A673 (cell line): ENCODE measurements at regions of chrX and their contacts with region 1.

Region 1: DNA sequence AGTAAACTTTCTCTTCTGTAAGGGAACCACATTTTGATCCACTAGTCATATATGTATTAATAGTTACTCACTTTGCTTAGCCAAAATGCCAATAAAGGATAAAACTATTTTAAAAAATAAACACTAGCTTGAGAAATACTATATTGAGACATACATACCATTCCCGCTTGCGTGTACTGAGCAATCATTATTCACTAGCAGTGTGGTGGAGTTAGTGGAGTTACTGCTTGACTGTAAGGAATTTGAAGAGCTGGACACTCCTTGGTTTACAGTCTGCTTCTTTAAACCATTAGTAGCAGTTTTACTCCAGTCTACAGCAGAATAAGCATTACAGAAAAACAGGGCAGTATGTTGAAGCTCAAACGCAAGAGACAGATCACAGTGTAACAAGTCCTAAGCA is 10.8 kb upstream of the PHKA2 start:
- DNase-seq: no peak
- H3K4me3 ChIP-seq: no peak overlapping the region
- H3K27ac ChIP-seq: no peak overlapping the region
- H3K4me1 ChIP-seq: peaks cover 32% of the 10 kb centered on the region
- H3K27me3 ChIP-seq: no peaks in the 10 kb centered on the region
- CTCF ChIP-seq: no peak

Region 2: DNA sequence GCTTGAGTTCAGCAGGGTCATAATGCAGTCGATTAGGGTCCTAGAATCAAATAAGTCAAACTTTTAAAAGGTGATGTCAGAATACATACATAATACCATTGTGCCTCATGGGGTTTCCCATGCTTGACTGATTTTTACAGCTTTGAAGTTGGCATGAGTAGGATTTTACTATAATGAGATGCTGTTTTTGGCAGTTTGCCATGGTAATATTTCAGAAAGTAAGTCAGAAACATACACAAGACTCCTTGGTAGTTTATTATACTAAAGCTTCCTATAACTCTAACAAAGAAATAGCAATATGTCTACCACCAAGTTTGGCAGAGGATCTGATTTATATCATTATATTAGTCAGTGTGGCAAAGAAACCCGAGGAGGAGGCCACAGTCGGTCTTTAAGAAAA is 56.0 kb before region 1 on chrX:
- CTCF ChIA-PET with region 1: no interaction called
- POLR2A ChIA-PET with region 1: no interaction called
- intact Hi-C with region 1: loop called (anchors 5 kb)
- DNase-seq: peak; percentile 86
- H3K4me3 ChIP-seq: no peak overlapping the region
- H3K27ac ChIP-seq: no peak overlapping the region
- H3K4me1 ChIP-seq: peaks cover 22% of the 10 kb centered on the region
- H3K27me3 ChIP-seq: no peaks in the 10 kb centered on the region
- CTCF ChIP-seq: no peak

Region 3: GRCh38 chrX:19237901-19238300 is 243.2 kb after region 1 on chrX:
- CTCF ChIA-PET with region 1: no interaction called
- POLR2A ChIA-PET with region 1: no interaction called
- intact Hi-C with region 1: no loop called
- DNase-seq: no peak
- H3K4me3 ChIP-seq: no peak overlapping the region
- H3K27ac ChIP-seq: no peak overlapping the region
- H3K4me1 ChIP-seq: no peaks in the 10 kb centered on the region
- H3K27me3 ChIP-seq: no peaks in the 10 kb centered on the region
- CTCF ChIP-seq: no peak